GM18951 (cell line): ENCODE measurements at regions of chr4 and their contacts with region 1.

Region 1: GRCh38 chr4:8403173-8403753 is 37.3 kb downstream of the ACOX3 start:
- POLR2A ChIP-seq: no peak

Region 2: DNA sequence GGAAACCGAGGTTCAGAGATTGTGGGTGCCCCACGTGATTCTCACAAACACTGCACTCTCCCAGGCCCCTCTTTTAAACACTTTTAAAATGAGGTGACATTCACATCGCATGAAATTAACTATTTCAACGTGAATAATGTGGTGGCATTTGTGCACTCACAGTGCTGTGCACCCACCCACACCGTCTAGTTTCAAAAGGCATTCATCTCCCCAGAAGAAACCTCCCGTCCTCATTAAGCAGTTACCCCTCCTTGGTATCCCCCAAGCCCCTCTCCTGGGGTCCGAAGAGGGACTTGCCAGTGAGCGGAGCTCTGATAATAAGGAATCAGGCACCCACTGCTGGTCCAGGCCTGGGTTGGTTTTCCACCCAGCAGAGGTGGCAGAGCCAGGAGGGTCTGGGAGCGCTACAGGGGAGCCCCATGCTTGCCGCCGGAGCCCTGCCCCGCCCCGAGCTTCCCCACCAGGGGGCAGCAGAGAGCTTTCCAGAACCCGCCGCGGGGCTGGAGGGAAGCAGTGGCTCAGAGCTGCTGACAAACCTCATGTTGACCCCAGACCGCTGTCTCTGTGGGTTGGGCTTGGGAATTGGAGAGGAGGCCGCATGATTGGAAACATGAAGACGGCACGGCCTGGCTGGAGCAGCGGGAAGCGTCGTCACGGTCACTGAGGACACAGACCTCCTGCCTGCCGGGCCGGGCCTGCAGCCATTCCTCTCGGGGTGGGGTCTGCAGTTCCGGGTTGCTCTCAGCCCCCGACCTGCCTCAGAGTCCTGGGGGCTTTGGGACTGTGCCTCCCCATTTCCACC is 161.2 kb before region 1 on chr4:
- in situ Hi-C with region 1: loop called (anchors 5 kb)
- POLR2A ChIP-seq: no peak